Heart left ventricle (tissue), 16 donors: ENCODE measurements at regions of chr1 and their contacts with region 1.

Region 1: GRCh38 chr1:2545759-2546514 is 10.2 kb upstream of the TNFRSF14 start:
- DNase-seq: peak; percentile 91 to 95 (median 92)
- ATAC-seq: peak; percentile 53 to 66 (median 58)
- H3K4me3 ChIP-seq: peak overlapping the region; percentile 22 to 86 (median 58)
- H3K27ac ChIP-seq: peak overlapping the region; percentile 87 to 99 (median 96)
- H3K4me1 ChIP-seq: peaks cover 23 to 84% (median 63%) of the 10 kb centered on the region in 12 donors
- H3K27me3 ChIP-seq: peaks cover 0 to 8% (median 2%) of the 10 kb centered on the region in 9 donors
- CTCF ChIP-seq: no peak
- POLR2A ChIP-seq: peak in 1 of 2 donors; percentile 28

Region 2: GRCh38 chr1:2194898-2195673 is 350.9 kb before region 1 on chr1:
- intact Hi-C with region 1: loop called in 5 of 10 experiments (anchors 5 to 10 kb)
- DNase-seq: peak; percentile 92 to 95 (median 94)
- ATAC-seq: peak; percentile 62 to 79 (median 76)
- H3K4me3 ChIP-seq: peak overlapping the region; percentile 51 to 88 (median 73)
- H3K27ac ChIP-seq: peak overlapping the region; percentile 82 to 98 (median 95)
- H3K4me1 ChIP-seq: peaks cover 6 to 67% (median 54%) of the 10 kb centered on the region in 12 donors
- H3K27me3 ChIP-seq: no peaks in the 10 kb centered on the region
- CTCF ChIP-seq: peak; percentile 85 to 98 (median 96)
- POLR2A ChIP-seq: peak in 1 of 2 donors; percentile 31

Region 3: DNA sequence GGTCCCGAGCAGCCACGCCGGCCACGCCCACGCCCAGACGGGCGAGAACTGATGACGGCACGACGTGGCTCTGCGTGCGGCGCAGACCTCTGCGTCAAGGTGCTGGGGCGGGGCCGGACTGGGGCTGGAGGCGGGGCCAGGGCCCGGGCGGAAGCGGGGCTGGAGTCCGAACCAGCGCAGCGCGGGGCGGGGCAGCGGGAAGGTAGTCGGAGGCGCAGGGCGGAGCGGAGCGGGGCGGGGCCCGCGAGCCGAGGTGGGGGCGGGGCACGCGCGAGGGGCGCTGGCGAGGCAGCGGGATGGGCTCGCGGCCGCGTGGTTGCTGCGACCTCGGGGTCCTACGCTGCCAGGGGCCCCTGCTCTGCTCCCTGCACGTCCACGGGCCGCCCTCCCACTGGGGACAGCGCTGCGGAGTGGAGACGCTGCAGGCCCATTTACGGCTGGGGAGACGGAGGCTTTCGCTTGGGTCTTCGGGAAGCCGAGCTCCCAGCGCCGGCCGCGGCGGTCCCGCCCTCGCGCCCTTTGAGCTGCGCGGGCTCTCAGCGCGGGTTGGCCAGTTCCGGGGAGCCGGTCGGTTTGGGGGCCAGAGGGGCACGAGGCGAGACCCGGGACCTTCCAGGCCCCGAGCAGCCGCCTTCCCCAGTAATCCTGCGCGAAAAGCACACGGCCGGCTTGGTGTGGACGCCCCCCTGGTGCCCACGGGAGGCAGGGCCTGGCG is 133.3 kb before region 1 on chr1 and contains the start of gene PEX10:
- intact Hi-C with region 1: loop called (anchors 1 to 2 kb)
- DNase-seq: peak; percentile 96 to 99 (median 98)
- ATAC-seq: peak; percentile 90 to 96 (median 94)
- H3K4me3 ChIP-seq: peak within 1 kb of the TSS; percentile 67 to 98 (median 91)
- H3K27ac ChIP-seq: peak within 1 kb of the TSS; percentile 41 to 93 (median 86)
- H3K4me1 ChIP-seq: peaks cover 4 to 37% (median 26%) of the 10 kb centered on the region in 12 donors
- H3K27me3 ChIP-seq: peaks cover 0 to 24% (median 17%) of the 10 kb centered on the region in 9 donors
- CTCF ChIP-seq: no peak
- POLR2A ChIP-seq: peak in 1 of 2 donors; percentile 70
- total RNA-seq, gene PEX10: 17.2 to 26.5 (median 18.9) TPM

Region 4: DNA sequence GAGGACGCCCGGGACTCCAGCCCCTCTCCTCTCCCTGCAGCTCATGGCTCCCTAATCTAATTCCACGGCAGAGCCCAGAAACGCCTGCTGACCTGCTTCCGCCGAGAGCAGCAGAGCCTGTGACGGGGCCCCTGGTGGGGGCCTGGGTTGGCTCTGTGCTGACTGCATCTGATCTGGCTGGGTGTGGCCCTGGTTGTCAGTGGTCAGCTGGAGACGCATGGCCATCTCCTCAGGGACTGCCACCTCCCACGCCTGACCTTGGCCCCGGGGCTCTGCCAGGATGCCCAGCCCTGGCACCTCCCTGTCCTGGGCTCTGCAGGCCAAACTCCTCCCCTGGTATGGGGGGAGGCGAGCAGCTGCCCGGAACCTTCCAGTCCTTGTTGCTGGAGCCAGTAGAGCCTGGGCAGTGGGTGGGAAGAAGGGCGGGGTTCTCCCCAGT is 71.0 kb before region 1 on chr1:
- intact Hi-C with region 1: no loop called
- DNase-seq: peak in 1 of 5 donors; percentile 24
- ATAC-seq: peak in 3 of 4 donors; percentile 38 to 63 (median 58)
- H3K4me3 ChIP-seq: no peak overlapping the region
- H3K27ac ChIP-seq: no peak overlapping the region
- H3K4me1 ChIP-seq: peaks cover 0 to 10% (median 0%) of the 10 kb centered on the region in 12 donors
- H3K27me3 ChIP-seq: peaks cover 0 to 48% (median 0%) of the 10 kb centered on the region in 9 donors
- CTCF ChIP-seq: no peak
- POLR2A ChIP-seq: no peak

Region 5: GRCh38 chr1:2586154-2587070 is 40.5 kb after region 1 on chr1 and contains the start of gene PRXL2B:
- intact Hi-C with region 1: loop called in 2 of 10 experiments (anchors 2 to 5 kb)
- DNase-seq: peak; percentile 99 to 100 (median 100)
- ATAC-seq: peak; percentile 93 to 96 (median 94)
- H3K4me3 ChIP-seq: peak within 1 kb of the TSS; percentile 64 to 96 (median 84)
- H3K27ac ChIP-seq: peak within 1 kb of the TSS; percentile 91 to 100 (median 98)
- H3K4me1 ChIP-seq: peaks cover 3 to 38% (median 18%) of the 10 kb centered on the region in 12 donors
- H3K27me3 ChIP-seq: no peaks in the 10 kb centered on the region
- CTCF ChIP-seq: no peak
- POLR2A ChIP-seq: peak; percentile 63 to 95
- total RNA-seq, gene PRXL2B: 5.1 to 13.9 (median 7.2) TPM